Heart right ventricle (tissue), 16 donors: ENCODE measurements at regions of chr1 and their contacts with region 1.

Region 1: GRCh38 chr1:59699227-59699847 is 115.4 kb upstream of the HOOK1 start:
- DNase-seq: no peak
- ATAC-seq: peak in 7 of 8 donors; percentile 34 to 67 (median 41)
- H3K4me3 ChIP-seq: no peak overlapping the region
- H3K27ac ChIP-seq: peak overlapping the region in 2 of 10 donors; percentile 19 to 68
- H3K4me1 ChIP-seq: peaks cover 6 to 58% (median 29%) of the 10 kb centered on the region in 9 donors
- H3K27me3 ChIP-seq: no peaks in the 10 kb centered on the region
- CTCF ChIP-seq: peak; percentile 90 to 98 (median 94)

Region 2: GRCh38 chr1:58903514-58904298 is 795.6 kb before region 1 on chr1:
- intact Hi-C with region 1: loop called in 5 of 10 experiments (anchors 5 to 10 kb)
- DNase-seq: peak; percentile 95 to 96
- ATAC-seq: peak; percentile 93 to 99 (median 96)
- H3K4me3 ChIP-seq: peak overlapping the region in 9 of 10 donors; percentile 35 to 67 (median 58)
- H3K27ac ChIP-seq: peak overlapping the region; percentile 90 to 99 (median 96)
- H3K4me1 ChIP-seq: peaks cover 5 to 43% (median 27%) of the 10 kb centered on the region in 9 donors
- H3K27me3 ChIP-seq: no peaks in the 10 kb centered on the region
- CTCF ChIP-seq: peak in 3 of 9 donors; percentile 6 to 7 (median 6)

Region 3: DNA sequence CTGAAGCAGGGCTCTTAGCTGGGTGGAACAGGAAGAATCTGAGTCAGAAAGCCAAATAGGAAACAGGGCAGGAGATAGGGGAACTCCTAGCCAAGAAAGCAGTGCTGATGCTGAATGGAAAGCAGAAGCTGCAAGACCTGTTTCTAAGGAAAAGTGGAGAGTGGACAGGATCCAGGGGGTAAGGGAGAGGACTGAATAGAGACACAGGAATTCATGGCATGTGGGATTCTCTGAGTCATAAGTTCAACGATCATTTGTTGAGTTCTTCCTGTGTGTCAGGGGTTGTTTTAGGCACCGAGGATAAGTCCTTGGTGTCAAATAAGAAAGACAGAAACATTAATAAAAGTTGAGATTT is 556.2 kb before region 1 on chr1:
- intact Hi-C with region 1: loop called in 2 of 10 experiments (anchors 5 to 10 kb)
- DNase-seq: no peak
- ATAC-seq: peak in 6 of 8 donors; percentile 18 to 49 (median 33)
- H3K4me3 ChIP-seq: no peak overlapping the region
- H3K27ac ChIP-seq: peak overlapping the region in 8 of 10 donors; percentile 15 to 86 (median 82)
- H3K4me1 ChIP-seq: peaks cover 5 to 74% (median 64%) of the 10 kb centered on the region in 9 donors
- H3K27me3 ChIP-seq: no peaks in the 10 kb centered on the region
- CTCF ChIP-seq: no peak

Region 4: DNA sequence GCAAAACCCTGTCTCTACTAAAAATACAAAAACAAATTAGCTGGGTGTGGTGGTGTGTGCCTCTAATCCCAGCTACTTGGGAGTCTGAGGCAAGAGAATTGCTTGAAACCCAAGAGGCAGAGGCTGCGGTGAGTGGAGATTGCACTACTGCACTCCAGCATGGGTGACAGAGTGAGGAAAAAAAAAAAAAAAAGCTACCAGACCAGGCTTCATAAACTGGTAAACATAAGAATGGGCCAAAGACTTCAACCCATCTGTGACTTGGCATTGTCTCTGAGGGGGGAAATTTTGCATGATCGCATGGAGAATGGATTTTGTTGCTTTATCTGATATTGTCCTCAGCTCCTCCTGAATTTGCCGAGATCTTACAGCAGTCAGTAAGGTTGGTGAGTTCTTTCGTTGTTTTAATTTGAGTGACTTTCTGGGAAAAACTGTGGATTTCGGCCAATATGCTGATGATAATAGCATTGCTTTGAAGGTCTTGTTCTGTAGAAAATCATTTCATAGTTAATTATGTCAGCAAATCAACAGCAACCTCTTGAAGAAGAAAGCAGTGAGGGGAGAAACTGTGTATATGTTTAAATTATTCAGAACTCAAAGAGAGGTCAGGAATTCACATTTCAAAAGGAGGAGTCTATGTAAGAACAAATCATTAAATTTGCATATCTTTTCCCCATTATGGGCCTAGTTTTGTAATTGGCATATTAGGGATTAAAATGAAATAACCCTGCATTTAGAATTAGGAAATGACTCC is 389.4 kb before region 1 on chr1:
- intact Hi-C with region 1: loop called in 2 of 10 experiments (anchors 10 kb)
- DNase-seq: no peak
- ATAC-seq: no peak
- H3K4me3 ChIP-seq: no peak overlapping the region
- H3K27ac ChIP-seq: no peak overlapping the region
- H3K4me1 ChIP-seq: no peaks in the 10 kb centered on the region
- H3K27me3 ChIP-seq: no peaks in the 10 kb centered on the region
- CTCF ChIP-seq: no peak

Region 5: GRCh38 chr1:59638231-59638711 is 61.1 kb before region 1 on chr1:
- intact Hi-C with region 1: loop called in 1 of 10 experiments (anchors 2 kb)
- DNase-seq: peak in 1 of 2 donors; percentile 30
- ATAC-seq: peak in 6 of 8 donors; percentile 25 to 67 (median 52)
- H3K4me3 ChIP-seq: no peak overlapping the region
- H3K27ac ChIP-seq: no peak overlapping the region
- H3K4me1 ChIP-seq: peaks cover 0 to 15% (median 0%) of the 10 kb centered on the region in 9 donors
- H3K27me3 ChIP-seq: no peaks in the 10 kb centered on the region
- CTCF ChIP-seq: peak in 1 of 9 donors; percentile 5

Region 6: GRCh38 chr1:59803458-59804038 is 104.2 kb after region 1 on chr1:
- intact Hi-C with region 1: no loop called
- DNase-seq: no peak
- ATAC-seq: no peak
- H3K4me3 ChIP-seq: no peak overlapping the region
- H3K27ac ChIP-seq: no peak overlapping the region
- H3K4me1 ChIP-seq: no peaks in the 10 kb centered on the region
- H3K27me3 ChIP-seq: no peaks in the 10 kb centered on the region
- CTCF ChIP-seq: no peak